ENCODE measurements at regions of chr15 and their contacts with region 1.

Region 1: DNA sequence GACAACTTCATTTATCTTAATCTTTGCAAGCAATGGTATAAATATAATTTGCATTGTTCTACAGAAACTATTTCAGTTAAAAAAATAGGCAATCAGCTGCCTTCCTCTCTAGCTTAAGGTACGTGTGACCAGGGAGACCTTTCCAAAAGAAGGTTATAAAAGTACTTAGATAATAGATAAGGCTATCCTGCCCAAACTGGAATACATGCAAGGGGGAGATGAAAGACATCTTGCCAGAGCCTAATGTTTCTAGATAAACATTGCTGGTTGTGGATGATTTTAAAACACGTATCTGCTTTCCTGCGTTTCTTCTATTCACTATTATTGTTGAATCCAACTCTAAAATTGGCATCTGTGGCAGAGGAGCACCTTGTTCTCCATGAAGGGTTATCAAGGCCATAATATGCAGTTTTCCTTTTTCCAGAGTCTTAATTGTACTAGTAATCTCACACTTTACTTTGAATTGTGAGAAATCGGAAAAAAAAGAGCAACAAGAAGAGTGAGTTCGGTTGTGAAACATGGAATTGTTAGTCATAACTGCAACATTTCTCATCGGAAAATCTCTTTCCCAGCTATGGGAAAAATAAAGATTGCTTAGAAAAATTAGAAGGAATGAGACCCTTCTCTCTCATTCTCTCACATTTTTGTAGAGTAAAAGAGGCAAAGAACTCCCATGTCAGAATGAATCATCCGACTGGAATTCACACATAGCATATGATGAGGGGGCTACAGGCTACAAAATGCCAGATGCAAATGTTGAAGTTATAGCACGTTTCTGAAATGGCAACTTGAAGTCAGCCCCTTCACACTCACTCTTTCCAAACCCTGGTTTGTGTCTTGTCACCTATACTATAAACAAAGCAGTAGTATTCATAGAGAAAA is 936.1 kb upstream of the NR2F2 start:
- DNase-seq: no peak
- H3K4me3 ChIP-seq: no peak overlapping the region
- H3K27ac ChIP-seq: no peak overlapping the region
- H3K4me1 ChIP-seq: peaks cover 0 to 8% (median 2%) of the 10 kb centered on the region in 4 donors
- H3K27me3 ChIP-seq: no peaks in the 10 kb centered on the region
- CTCF ChIP-seq: no peak
- EP300 ChIP-seq: no peak
- POLR2A ChIP-seq: no peak

Region 2: GRCh38 chr15:95494971-95495541 is 100.6 kb after region 1 on chr15:
- in situ Hi-C with region 1: loop called in 1 of 4 experiments (anchors 25 kb)
- intact Hi-C with region 1: no loop called
- DNase-seq: no peak
- H3K4me3 ChIP-seq: no peak overlapping the region
- H3K27ac ChIP-seq: no peak overlapping the region
- H3K4me1 ChIP-seq: no peaks in the 10 kb centered on the region
- H3K27me3 ChIP-seq: no peaks in the 10 kb centered on the region
- CTCF ChIP-seq: no peak
- EP300 ChIP-seq: no peak
- POLR2A ChIP-seq: no peak

Measured in transverse colon (tissue), 4 donors.